HAP-1 (cell line): ENCODE measurements at regions of chr1 and their contacts with region 1.

Region 1: GRCh38 chr1:13687151-13687715 is 12.8 kb upstream of the PRDM2 start:
- DNase-seq: no peak
- H3K4me3 ChIP-seq: no peak overlapping the region
- H3K4me1 ChIP-seq: no peaks in the 10 kb centered on the region; the same call in 1 of the 2 replicates
- H3K27me3 ChIP-seq: no peaks in the 10 kb centered on the region

Region 2: GRCh38 chr1:13443335-13443984 is 243.8 kb before region 1 on chr1:
- in situ Hi-C with region 1: no loop called
- DNase-seq: no peak
- H3K4me3 ChIP-seq: no peak overlapping the region
- H3K4me1 ChIP-seq: no peaks in the 10 kb centered on the region
- H3K27me3 ChIP-seq: no peaks in the 10 kb centered on the region

Region 3: GRCh38 chr1:13619909-13620308 is 67.3 kb before region 1 on chr1:
- in situ Hi-C with region 1: loop called (anchors 10 kb)
- DNase-seq: no peak
- H3K4me3 ChIP-seq: no peak overlapping the region
- H3K4me1 ChIP-seq: peaks cover 10% of the 10 kb centered on the region
- H3K27me3 ChIP-seq: no peaks in the 10 kb centered on the region